ENCODE measurements at regions of chr11 and their contacts with region 1.

Region 1: GRCh38 chr11:95092549-95093324 is 3.1 kb downstream of the ENDOD1 start:
- DNase-seq: peak; percentile 61
- ATAC-seq: no peak
- H3K4me3 ChIP-seq: no peak overlapping the region
- H3K27ac ChIP-seq: no peak overlapping the region
- H3K4me1 ChIP-seq: peaks cover 22% of the 10 kb centered on the region
- H3K27me3 ChIP-seq: no peaks in the 10 kb centered on the region
- CTCF ChIP-seq: peak; percentile 74

Region 2: GRCh38 chr11:95055283-95055897 is 37.3 kb before region 1 on chr11:
- CTCF ChIA-PET with region 1: no interaction called
- POLR2A ChIA-PET with region 1: no interaction called
- in situ Hi-C with region 1: no loop called
- intact Hi-C with region 1: no loop called
- DNase-seq: no peak
- ATAC-seq: no peak
- H3K4me3 ChIP-seq: no peak overlapping the region
- H3K27ac ChIP-seq: no peak overlapping the region
- H3K4me1 ChIP-seq: no peaks in the 10 kb centered on the region
- H3K27me3 ChIP-seq: peaks cover 15% of the 10 kb centered on the region; the same call in 1 of the 2 replicates
- CTCF ChIP-seq: no peak

Region 3: GRCh38 chr11:96073536-96073935 is 980.8 kb after region 1 on chr11:
- CTCF ChIA-PET with region 1: no interaction called
- POLR2A ChIA-PET with region 1: interaction called, 13 read pairs
- in situ Hi-C with region 1: no loop called
- intact Hi-C with region 1: no loop called
- DNase-seq: no peak
- ATAC-seq: no peak
- H3K4me3 ChIP-seq: no peak overlapping the region
- H3K27ac ChIP-seq: no peak overlapping the region
- H3K4me1 ChIP-seq: no peaks in the 10 kb centered on the region
- H3K27me3 ChIP-seq: no peaks in the 10 kb centered on the region
- CTCF ChIP-seq: no peak

Measured in Panc1 (cell line).